ENCODE measurements at regions of chr7 and their contacts with region 1.

Region 1: DNA sequence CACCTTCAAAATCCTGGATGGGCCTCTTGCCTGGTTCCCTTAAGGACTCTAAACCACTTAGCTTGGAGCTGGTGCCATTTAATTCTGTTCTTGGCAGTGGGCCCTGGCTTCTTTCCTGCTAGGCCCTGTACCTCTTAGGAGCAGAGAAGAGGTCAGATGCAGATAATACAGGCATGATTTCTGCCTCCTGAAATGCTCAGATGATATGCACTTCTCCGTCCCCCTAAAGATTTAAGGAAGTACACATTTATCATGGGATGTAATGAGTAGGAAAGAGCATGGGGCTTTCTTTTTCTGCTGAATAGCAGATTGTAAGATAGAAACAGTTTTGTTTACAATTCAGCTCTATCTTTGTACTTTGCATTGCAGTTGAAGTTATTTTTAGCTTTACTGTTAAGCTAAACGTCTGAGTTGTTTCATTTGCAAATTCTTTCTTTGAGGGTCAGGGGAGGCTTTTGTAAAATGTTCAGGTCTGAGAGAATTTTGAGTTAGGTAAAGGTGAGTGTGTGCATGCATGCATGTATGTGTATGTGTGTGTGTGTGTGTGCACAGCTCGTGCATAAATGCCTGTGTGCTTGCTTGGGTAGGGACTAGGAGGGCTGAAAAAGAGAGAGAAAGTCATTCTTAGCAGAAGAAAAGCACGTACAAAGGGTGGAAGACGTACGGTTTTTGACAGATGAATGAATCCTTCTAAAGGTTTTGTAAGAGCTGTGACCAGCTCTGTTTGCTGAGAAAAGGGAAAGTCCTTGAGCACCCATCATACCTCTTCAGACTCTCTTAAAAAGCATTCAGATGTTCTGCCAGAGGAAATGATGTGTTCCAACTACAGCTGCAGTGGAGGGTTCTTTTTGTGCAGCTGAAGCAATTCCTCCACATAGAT is 364.2 kb downstream of the AUTS2 start:
- DNase-seq: no peak
- ATAC-seq: peak; percentile 66
- H3K4me3 Mint-ChIP-seq: peak overlapping the region; percentile 58
- H3K27ac Mint-ChIP-seq: peak overlapping the region; percentile 74
- H3K4me1 Mint-ChIP-seq: peaks cover 55% of the 10 kb centered on the region
- H3K27me3 Mint-ChIP-seq: no peaks in the 10 kb centered on the region
- CTCF ChIP-seq: no peak

Region 2: GRCh38 chr7:69951458-69951857 is 11.0 kb before region 1 on chr7:
- CTCF ChIA-PET with region 1: interaction called, 5 read pairs
- POLR2A ChIA-PET with region 1: interaction called, 8 read pairs
- intact Hi-C with region 1: loop called (anchors 1 kb)
- DNase-seq: no peak
- ATAC-seq: no peak
- H3K4me3 Mint-ChIP-seq: no peak overlapping the region
- H3K27ac Mint-ChIP-seq: no peak overlapping the region
- H3K4me1 Mint-ChIP-seq: peaks cover 53% of the 10 kb centered on the region
- H3K27me3 Mint-ChIP-seq: no peaks in the 10 kb centered on the region
- CTCF ChIP-seq: no peak

Region 3: DNA sequence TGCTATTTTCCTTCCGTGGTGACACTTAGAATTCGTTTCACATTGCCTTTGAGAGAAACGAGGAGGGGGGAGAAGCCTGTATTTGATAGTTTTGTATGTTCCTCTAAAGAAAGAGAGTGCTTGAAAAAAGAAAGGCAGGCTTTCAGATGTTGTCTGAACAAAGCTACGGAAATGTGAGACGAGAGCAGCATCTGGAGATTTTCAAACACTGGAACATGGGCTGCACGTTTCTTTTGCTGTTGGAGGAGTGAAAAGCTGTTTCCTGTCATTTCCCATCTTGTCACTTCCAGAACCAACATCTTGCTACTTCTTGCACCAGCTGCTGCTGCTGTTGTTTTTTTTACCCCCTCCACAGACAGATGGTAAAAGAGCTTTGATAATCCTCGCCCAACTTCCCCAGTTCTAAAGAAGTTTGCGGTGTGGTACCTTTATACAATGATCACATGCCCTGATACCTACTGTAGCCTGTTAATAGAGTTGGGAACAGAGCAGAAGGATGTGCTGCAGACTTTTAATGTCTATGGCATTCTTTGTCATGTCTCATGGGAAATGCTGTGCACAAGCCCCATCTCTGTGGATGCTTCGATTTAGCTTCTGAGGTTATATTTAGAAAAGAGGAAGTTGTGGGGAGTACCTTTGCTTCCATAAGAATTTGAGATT is 44.0 kb after region 1 on chr7:
- CTCF ChIA-PET with region 1: no interaction called
- POLR2A ChIA-PET with region 1: no interaction called
- intact Hi-C with region 1: loop called (anchors 5 kb)
- DNase-seq: no peak
- ATAC-seq: peak; percentile 66
- H3K4me3 Mint-ChIP-seq: peak overlapping the region; percentile 39
- H3K27ac Mint-ChIP-seq: peak overlapping the region; percentile 53
- H3K4me1 Mint-ChIP-seq: peaks cover 26% of the 10 kb centered on the region
- H3K27me3 Mint-ChIP-seq: no peaks in the 10 kb centered on the region
- CTCF ChIP-seq: no peak

Region 4: GRCh38 chr7:70017357-70017756 is 54.9 kb after region 1 on chr7:
- CTCF ChIA-PET with region 1: no interaction called
- POLR2A ChIA-PET with region 1: no interaction called
- intact Hi-C with region 1: no loop called
- DNase-seq: no peak
- ATAC-seq: no peak
- H3K4me3 Mint-ChIP-seq: no peak overlapping the region
- H3K27ac Mint-ChIP-seq: no peak overlapping the region
- H3K4me1 Mint-ChIP-seq: peaks cover 24% of the 10 kb centered on the region
- H3K27me3 Mint-ChIP-seq: no peaks in the 10 kb centered on the region
- CTCF ChIP-seq: no peak

Measured in activated B cell treated with CpG ODN at 0.5 μM for 24 hours (primary cell).